Activated naive CD4-positive, alpha-beta T cell treated with anti-CD3 and anti-CD28 coated beads for 36 hours (primary cell): ENCODE measurements at regions of chr1 and their contacts with region 1.

Region 1: GRCh38 chr1:203673550-203674427 is 47.2 kb downstream of the ATP2B4 start:
- DNase-seq: peak; percentile 84
- H3K4me3 Mint-ChIP-seq: peak overlapping the region; percentile 33
- H3K27ac Mint-ChIP-seq: peak overlapping the region; percentile 77
- H3K4me1 Mint-ChIP-seq: peaks cover 45% of the 10 kb centered on the region
- H3K27me3 Mint-ChIP-seq: no peaks in the 10 kb centered on the region

Region 2: GRCh38 chr1:203663294-203663693 is 10.5 kb before region 1 on chr1:
- CTCF ChIA-PET with region 1: interaction called, 7 read pairs
- intact Hi-C with region 1: loop called (anchors 1 kb)
- DNase-seq: peak; percentile 40
- H3K4me3 Mint-ChIP-seq: no peak overlapping the region
- H3K27ac Mint-ChIP-seq: no peak overlapping the region
- H3K4me1 Mint-ChIP-seq: peaks cover 28% of the 10 kb centered on the region
- H3K27me3 Mint-ChIP-seq: no peaks in the 10 kb centered on the region

Region 3: DNA sequence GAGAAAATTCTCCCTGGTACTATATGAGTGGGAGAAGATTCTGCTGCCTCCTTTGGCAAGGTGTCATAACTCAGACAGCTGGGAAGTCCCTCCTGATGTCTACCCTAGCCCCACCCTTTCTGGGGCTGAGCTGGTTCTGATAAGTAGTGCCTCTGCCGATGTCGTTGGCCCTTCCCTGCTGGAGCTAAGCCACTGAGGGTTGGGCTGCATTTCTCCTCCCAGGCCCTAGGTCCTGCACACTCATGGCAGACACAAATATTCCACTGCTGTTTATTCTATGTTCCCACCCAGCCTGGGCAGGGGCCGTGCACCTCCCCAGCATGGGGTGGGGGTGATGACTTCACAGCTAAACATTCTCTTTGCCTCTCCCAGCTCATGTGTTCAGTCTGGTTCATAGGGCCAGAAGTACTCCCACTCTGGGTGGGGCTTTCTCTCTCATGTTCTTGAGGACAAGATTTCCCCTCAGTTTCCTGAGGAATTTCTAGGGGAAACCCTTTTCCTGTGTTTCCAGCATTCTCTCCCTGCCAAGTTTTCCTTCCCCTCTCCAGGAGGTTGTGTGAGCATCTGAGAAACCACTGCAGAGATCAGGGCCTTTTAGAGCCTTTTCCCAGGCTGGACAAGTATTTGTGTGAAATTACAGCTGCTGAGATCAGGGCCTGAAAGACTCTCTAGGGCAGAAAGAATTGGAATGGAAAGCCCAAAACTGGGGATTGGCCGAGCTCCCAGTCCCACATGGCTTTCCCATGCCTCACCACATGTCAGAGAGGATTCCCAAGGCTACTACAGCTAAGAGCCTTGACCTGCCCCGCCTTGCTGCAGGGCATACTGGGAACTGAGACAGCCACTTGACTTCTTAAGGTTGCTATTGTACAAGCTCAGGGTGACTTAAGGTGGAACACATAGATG is 19.0 kb after region 1 on chr1:
- CTCF ChIA-PET with region 1: interaction called, 3 read pairs
- intact Hi-C with region 1: loop called (anchors 1 kb)
- DNase-seq: peak; percentile 54
- H3K4me3 Mint-ChIP-seq: no peak overlapping the region
- H3K27ac Mint-ChIP-seq: no peak overlapping the region
- H3K4me1 Mint-ChIP-seq: peaks cover 10% of the 10 kb centered on the region
- H3K27me3 Mint-ChIP-seq: no peaks in the 10 kb centered on the region

Region 4: GRCh38 chr1:204751894-204752687 is 1078.3 kb after region 1 on chr1:
- CTCF ChIA-PET with region 1: no interaction called
- intact Hi-C with region 1: no loop called
- DNase-seq: no peak
- H3K4me3 Mint-ChIP-seq: no peak overlapping the region
- H3K27ac Mint-ChIP-seq: no peak overlapping the region
- H3K4me1 Mint-ChIP-seq: no peaks in the 10 kb centered on the region
- H3K27me3 Mint-ChIP-seq: no peaks in the 10 kb centered on the region